WTC11 (cell line): ENCODE measurements at regions of chr19 and their contacts with region 1.

Region 1: GRCh38 chr19:8580710-8581281 is 3.6 kb upstream of the MYO1F start:
- DNase-seq: peak; percentile 88
- ATAC-seq: peak; percentile 76
- H3K4me3 Mint-ChIP-seq: no peak overlapping the region
- H3K27ac Mint-ChIP-seq: no peak overlapping the region
- H3K4me1 Mint-ChIP-seq: peaks cover 20% of the 10 kb centered on the region
- H3K27me3 Mint-ChIP-seq: peaks cover 6% of the 10 kb centered on the region
- CTCF ChIP-seq: peak; percentile 99

Region 2: GRCh38 chr19:8456064-8456463 is 124.7 kb before region 1 on chr19:
- CTCF ChIA-PET with region 1: interaction called, 12 read pairs
- POLR2A ChIA-PET with region 1: no interaction called
- DNase-seq: peak; percentile 46
- ATAC-seq: peak; percentile 85
- H3K4me3 Mint-ChIP-seq: no peak overlapping the region
- H3K27ac Mint-ChIP-seq: peak overlapping the region; percentile 73
- H3K4me1 Mint-ChIP-seq: peaks cover 99% of the 10 kb centered on the region
- H3K27me3 Mint-ChIP-seq: no peaks in the 10 kb centered on the region
- CTCF ChIP-seq: no peak

Region 3: DNA sequence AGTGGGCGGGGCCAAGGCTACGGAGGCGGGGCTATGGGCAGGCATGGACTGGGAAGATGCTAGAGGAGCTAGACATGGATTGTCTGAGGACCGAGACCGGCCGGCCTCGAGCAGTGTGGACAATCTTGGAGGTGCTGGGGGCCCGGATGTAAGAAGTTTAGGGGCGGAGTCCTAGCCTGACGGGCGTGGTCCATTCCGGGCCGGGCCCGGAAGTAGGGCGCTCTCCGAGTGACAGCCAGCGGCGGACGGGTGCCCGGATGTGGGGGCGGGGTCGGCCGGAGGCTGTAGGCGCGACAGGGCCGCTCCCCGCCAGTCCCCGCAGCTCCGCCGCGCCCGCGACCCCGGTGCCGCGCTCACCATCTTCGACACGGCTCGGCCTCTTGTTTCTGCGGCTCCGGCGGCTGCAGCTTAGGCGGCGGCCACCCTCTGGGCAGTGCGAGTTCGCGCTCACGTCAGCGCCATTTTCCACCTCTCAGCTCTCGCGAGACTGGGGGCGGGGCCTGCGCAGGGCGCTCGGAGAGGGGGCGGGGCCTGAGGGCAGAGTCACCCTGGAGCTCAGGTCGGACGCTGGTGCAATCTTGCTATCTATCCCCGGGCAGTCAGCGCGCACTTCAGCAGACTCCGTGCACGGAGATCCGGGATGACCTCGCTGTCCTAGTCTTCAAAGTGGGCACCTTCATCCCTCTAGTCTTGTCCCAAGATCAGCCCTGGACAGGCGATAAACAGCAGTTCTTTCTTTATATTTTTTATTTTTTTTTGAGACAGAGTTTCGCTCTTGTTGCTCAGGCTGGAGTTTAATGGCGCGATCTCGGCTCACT is 66.9 kb before region 1 on chr19 and contains the start of gene ZNF414:
- CTCF ChIA-PET with region 1: interaction called, 75 read pairs
- POLR2A ChIA-PET with region 1: interaction called, 9 read pairs
- DNase-seq: peak; percentile 100
- ATAC-seq: peak; percentile 87
- H3K4me3 Mint-ChIP-seq: peak within 1 kb of the TSS; percentile 86
- H3K27ac Mint-ChIP-seq: peak within 1 kb of the TSS; percentile 100
- H3K4me1 Mint-ChIP-seq: peaks cover 16% of the 10 kb centered on the region
- H3K27me3 Mint-ChIP-seq: peaks cover 6% of the 10 kb centered on the region; the same call in 1 of the 2 replicates
- CTCF ChIP-seq: no peak
- total RNA-seq, gene ZNF414: 38.2 to 47.4 TPM (median 46.1 TPM) in 3 replicates

Region 4: DNA sequence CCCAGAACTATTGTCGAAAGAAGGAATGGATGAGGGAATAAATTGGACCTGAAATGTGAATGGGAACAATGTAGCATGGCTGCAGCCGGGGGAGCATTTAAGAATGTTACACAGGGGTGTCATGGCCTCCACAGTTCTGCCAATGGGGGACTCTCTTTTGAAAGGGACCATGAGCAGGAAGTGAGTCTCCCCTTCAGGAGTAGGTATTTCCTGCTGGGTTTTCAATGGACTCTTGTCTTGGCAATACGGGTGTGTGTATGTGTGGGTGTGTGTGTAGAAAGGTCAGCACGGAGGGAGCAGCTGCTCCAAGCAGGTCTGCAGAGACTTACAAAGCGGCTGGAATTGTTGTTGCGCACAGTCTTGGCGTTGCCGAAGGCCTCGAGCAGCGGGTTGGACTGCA is 28.0 kb before region 1 on chr19:
- CTCF ChIA-PET with region 1: interaction called, 16 read pairs
- POLR2A ChIA-PET with region 1: no interaction called
- DNase-seq: peak; percentile 52
- ATAC-seq: peak; percentile 91
- H3K4me3 Mint-ChIP-seq: no peak overlapping the region
- H3K27ac Mint-ChIP-seq: no peak overlapping the region
- H3K4me1 Mint-ChIP-seq: peaks cover 4% of the 10 kb centered on the region; the same call in 1 of the 2 replicates
- H3K27me3 Mint-ChIP-seq: peaks cover 4% of the 10 kb centered on the region; the same call in 1 of the 2 replicates
- CTCF ChIP-seq: no peak

Region 5: GRCh38 chr19:8609279-8610040 is 28.7 kb after region 1 on chr19:
- CTCF ChIA-PET with region 1: interaction called, 18 read pairs
- POLR2A ChIA-PET with region 1: no interaction called
- DNase-seq: peak; percentile 72
- ATAC-seq: peak; percentile 75
- H3K4me3 Mint-ChIP-seq: peak overlapping the region; percentile 89
- H3K27ac Mint-ChIP-seq: peak overlapping the region; percentile 89
- H3K4me1 Mint-ChIP-seq: peaks cover 46% of the 10 kb centered on the region
- H3K27me3 Mint-ChIP-seq: no peaks in the 10 kb centered on the region
- CTCF ChIP-seq: no peak

Region 6: GRCh38 chr19:8641908-8642547 is 61.2 kb after region 1 on chr19:
- CTCF ChIA-PET with region 1: interaction called, 22 read pairs
- POLR2A ChIA-PET with region 1: no interaction called
- DNase-seq: no peak
- ATAC-seq: 0 out of 2 replicates have a peak, but pooled peaks have one; percentile 30
- H3K4me3 Mint-ChIP-seq: no peak overlapping the region
- H3K27ac Mint-ChIP-seq: no peak overlapping the region
- H3K4me1 Mint-ChIP-seq: 0 out of 2 replicates have a peak, but pooled peaks cover 2% of the 10 kb centered on the region
- H3K27me3 Mint-ChIP-seq: peaks cover 27% of the 10 kb centered on the region
- CTCF ChIP-seq: peak; percentile 37; the same call in 1 of the 2 replicates

Region 7: DNA sequence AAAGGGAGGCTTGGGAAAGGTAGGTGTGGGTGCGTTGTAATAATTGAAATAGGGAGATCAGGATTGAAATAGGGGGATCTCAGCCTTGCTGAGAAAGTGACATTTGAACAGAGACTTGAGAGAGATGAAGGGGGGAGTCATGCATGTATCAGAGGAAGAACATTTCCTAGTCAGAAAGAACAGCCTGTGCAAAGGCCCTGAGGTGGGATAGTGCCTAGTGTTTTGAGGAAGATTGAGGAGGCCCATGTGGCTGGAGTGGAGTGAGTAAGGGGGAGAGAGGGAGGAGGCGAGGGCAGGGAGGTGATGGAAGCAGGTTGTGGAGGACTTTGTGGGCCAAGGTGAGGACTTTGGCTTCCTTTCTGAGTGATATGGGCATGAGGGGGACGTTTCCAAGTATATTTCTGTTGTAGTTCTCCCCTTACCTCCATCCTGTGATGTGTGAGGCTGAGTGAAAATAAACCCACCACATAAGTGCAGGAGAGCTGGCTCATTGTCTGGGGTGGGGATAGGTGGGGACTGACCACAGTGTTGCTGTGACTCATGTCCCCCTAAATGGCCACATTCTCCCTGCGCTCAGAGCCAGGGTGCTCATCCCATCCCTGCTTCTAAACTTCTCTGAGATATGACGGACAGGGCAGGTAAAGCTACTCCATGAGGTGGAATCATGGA is 100.0 kb after region 1 on chr19:
- CTCF ChIA-PET with region 1: no interaction called
- POLR2A ChIA-PET with region 1: no interaction called
- DNase-seq: no peak
- ATAC-seq: no peak
- H3K4me3 Mint-ChIP-seq: no peak overlapping the region
- H3K27ac Mint-ChIP-seq: no peak overlapping the region
- H3K4me1 Mint-ChIP-seq: no peaks in the 10 kb centered on the region
- H3K27me3 Mint-ChIP-seq: peaks cover 11% of the 10 kb centered on the region
- CTCF ChIP-seq: no peak